K562 (cell line): ENCODE measurements at regions of chr2 and their contacts with region 1.

Region 1: DNA sequence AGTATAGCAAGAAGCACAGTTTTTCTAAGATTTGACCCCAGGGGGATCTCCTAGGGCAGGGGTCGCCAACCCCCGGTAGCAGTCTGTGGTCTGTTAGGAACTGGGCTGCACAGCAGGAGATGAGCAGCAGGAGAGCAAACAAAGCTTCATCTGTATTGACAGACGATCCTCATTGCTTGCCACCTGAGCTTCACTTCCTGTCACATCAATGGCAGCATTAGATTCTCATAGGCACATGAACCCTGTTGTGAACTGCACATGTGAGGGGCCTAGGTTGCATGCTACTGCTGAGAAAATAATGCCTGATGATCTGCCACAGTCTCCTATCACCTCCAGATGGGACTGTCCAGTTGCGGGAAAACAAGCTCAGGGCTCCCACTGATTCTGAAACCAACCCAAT is 136.2 kb downstream of the RGPD3 start:
- DNase-seq: no peak
- ATAC-seq: no peak
- H3K4me3 ChIP-seq: no peak overlapping the region
- H3K27ac ChIP-seq: no peak overlapping the region
- H3K4me1 ChIP-seq: no peaks in the 10 kb centered on the region
- H3K27me3 ChIP-seq: 0 out of 5 replicates have a peak, but pooled peaks cover 0 to 5% of the 10 kb centered on the region in 2 experiments
- CTCF ChIP-seq: no peak
- EP300 ChIP-seq: no peak
- POLR2A ChIP-seq: no peak
- RAD21 ChIP-seq: no peak

Region 2: GRCh38 chr2:106296182-106296815 is 35.8 kb before region 1 on chr2:
- CTCF ChIA-PET with region 1: no interaction called
- POLR2A ChIA-PET with region 1: no interaction called
- in situ Hi-C with region 1: no loop called
- intact Hi-C with region 1: no loop called
- DNase-seq: no peak
- ATAC-seq: no peak
- H3K4me3 ChIP-seq: no peak overlapping the region
- H3K27ac ChIP-seq: no peak overlapping the region
- H3K4me1 ChIP-seq: no peaks in the 10 kb centered on the region
- H3K27me3 ChIP-seq: peaks cover 5 to 16% of the 10 kb centered on the region in 2 experiments; a peak in 3 of 5 replicates
- CTCF ChIP-seq: no peak
- EP300 ChIP-seq: no peak
- POLR2A ChIP-seq: no peak
- RAD21 ChIP-seq: no peak

Region 3: DNA sequence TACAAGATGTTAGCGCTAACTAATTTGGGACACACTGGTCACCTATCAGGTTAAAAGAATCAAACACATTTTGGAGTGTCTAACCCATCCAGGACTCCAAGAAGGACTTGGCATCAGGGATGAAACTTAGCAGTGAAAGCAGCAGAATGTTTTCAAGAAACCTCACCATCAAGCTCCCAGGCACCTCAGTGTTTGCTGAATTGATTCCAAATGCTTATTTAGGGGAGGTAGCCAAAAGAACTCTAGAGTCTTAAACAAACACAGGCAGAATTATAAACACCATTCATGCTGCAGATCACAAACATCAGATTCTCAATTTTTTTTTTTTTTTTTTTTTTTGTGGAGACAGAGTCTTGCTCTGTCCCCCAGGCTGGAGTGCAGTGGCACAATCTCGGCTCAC is 15.1 kb before region 1 on chr2:
- CTCF ChIA-PET with region 1: no interaction called
- POLR2A ChIA-PET with region 1: no interaction called
- in situ Hi-C with region 1: no loop called
- intact Hi-C with region 1: loop called (anchors 1 kb)
- DNase-seq: no peak
- ATAC-seq: no peak
- H3K4me3 ChIP-seq: no peak overlapping the region
- H3K27ac ChIP-seq: no peak overlapping the region
- H3K4me1 ChIP-seq: no peaks in the 10 kb centered on the region
- H3K27me3 ChIP-seq: peaks cover 0 to 16% of the 10 kb centered on the region in 2 experiments; a peak in 3 of 5 replicates
- CTCF ChIP-seq: no peak
- EP300 ChIP-seq: no peak
- POLR2A ChIP-seq: no peak
- RAD21 ChIP-seq: no peak

Region 4: DNA sequence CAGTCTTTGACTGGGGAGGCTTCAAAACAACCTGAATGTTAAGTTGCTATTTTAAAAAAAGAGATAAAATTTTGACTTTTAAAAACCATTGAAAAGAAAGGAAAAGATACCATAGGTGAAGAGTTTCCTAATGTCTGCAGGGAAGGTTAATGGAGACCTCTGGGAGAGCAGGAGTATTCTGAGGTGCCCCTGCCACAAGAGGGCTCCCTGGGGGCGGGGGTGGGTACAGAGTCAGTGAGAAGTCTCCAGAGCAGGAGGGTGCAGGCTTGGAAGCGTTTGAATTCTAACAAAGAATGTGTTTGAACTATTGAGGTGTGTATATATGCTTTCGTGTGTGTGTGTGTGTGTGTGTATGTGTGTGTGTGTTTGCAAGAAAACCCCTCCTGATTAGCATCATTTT is 600.6 kb after region 1 on chr2:
- CTCF ChIA-PET with region 1: no interaction called
- POLR2A ChIA-PET with region 1: no interaction called
- in situ Hi-C with region 1: no loop called
- intact Hi-C with region 1: no loop called
- DNase-seq: no peak
- ATAC-seq: no peak
- H3K4me3 ChIP-seq: no peak overlapping the region
- H3K27ac ChIP-seq: no peak overlapping the region
- H3K4me1 ChIP-seq: no peaks in the 10 kb centered on the region
- H3K27me3 ChIP-seq: no peaks in the 10 kb centered on the region
- CTCF ChIP-seq: no peak
- EP300 ChIP-seq: no peak
- POLR2A ChIP-seq: no peak
- RAD21 ChIP-seq: no peak